Kidney (tissue), 22 donors: ENCODE measurements at regions of chr10 and their contacts with region 1.

Region 1: DNA sequence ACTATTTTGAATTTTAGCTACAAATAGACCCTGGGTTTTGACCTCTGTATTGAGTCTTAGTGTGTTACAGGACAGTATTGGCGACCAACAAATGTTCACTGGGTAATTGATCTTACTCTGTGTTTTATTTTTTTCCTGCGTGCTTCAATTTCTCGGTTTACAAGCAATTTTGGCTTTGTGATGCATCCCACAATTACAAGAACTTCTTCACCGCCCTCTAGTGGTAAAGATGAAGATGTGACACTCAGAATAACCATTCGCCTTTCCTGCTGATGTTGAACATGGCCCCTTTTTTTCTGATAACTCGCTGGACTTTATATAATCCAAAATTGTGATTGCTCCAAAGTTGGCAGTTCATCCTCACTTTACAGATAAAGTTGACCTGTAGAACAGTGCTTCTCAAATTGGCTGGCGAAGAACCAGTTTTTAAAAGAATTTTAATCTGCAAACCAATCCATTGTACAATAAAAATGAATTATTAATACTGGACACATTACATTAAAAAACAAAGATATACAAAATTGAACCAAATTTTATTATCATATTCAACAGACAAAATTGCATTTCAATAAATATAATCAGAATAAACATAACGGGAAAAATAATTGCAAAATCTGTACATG is 20.2 kb upstream of the SMC3 start:
- DNase-seq: peak in 2 of 5 donors; percentile 69 to 73
- H3K4me3 ChIP-seq: no peak overlapping the region
- H3K27ac ChIP-seq: no peak overlapping the region
- H3K4me1 ChIP-seq: no peaks in the 10 kb centered on the region
- H3K27me3 ChIP-seq: peaks cover 2% of the 10 kb centered on the region
- CTCF ChIP-seq: peak; percentile 88

Region 2: GRCh38 chr10:110067960-110068770 is 479.1 kb before region 1 on chr10:
- intact Hi-C with region 1: no loop called
- DNase-seq: peak in 1 of 5 donors; percentile 20
- H3K4me3 ChIP-seq: no peak overlapping the region
- H3K27ac ChIP-seq: peak overlapping the region in 1 of 2 donors; percentile 34
- H3K4me1 ChIP-seq: peaks cover 3 to 14% (median 9%) of the 10 kb centered on the region in 3 donors
- H3K27me3 ChIP-seq: no peaks in the 10 kb centered on the region
- CTCF ChIP-seq: no peak

Region 3: DNA sequence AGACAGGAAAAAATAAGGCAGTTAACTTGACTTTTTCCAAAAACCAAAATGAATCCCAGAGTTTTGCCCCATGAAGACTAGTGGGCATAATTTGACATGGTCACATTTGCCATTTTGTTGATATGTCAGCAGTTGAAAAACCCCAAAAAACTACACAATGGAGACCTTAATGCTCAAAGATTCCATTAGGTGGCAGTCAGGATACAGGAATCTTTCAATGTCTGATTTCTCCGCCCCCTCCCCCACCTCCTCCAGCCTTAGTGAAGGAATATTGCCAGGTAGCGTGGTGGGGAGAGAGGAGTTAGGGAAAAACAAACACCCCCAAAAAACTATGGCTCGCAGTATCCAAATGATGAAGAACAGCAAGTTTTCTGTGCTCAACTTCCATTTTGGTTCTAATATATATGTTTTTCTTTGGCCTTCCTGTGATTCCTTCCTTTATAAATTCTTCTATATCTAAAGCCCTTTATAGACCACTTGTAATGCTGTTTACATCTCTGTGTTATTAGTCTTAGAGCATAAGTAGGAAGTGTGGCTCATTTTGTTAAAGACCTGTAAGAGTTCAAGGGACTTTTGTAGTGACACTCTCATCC is 235.8 kb before region 1 on chr10:
- intact Hi-C with region 1: loop called (anchors 5 kb)
- DNase-seq: peak in 4 of 5 donors; percentile 58 to 84 (median 70)
- H3K4me3 ChIP-seq: no peak overlapping the region
- H3K27ac ChIP-seq: no peak overlapping the region
- H3K4me1 ChIP-seq: no peaks in the 10 kb centered on the region
- H3K27me3 ChIP-seq: no peaks in the 10 kb centered on the region
- CTCF ChIP-seq: peak; percentile 68